Astrocyte of the cerebellum (primary cell): ENCODE measurements at regions of chr4 and their contacts with region 1.

Region 1: GRCh38 chr4:15231265-15232091 is 196.4 kb upstream of the C1QTNF7 start:
- DNase-seq: peak; percentile 85
- H3K4me3 ChIP-seq: no peak overlapping the region
- CTCF ChIP-seq: peak; percentile 77

Region 2: GRCh38 chr4:15457406-15458201 is 226.1 kb after region 1 on chr4:
- in situ Hi-C with region 1: loop called (anchors 25 kb)
- DNase-seq: peak; percentile 59
- H3K4me3 ChIP-seq: no peak overlapping the region
- CTCF ChIP-seq: peak; percentile 58